ENCODE measurements at regions of chr16 and their contacts with region 1.

Region 1: DNA sequence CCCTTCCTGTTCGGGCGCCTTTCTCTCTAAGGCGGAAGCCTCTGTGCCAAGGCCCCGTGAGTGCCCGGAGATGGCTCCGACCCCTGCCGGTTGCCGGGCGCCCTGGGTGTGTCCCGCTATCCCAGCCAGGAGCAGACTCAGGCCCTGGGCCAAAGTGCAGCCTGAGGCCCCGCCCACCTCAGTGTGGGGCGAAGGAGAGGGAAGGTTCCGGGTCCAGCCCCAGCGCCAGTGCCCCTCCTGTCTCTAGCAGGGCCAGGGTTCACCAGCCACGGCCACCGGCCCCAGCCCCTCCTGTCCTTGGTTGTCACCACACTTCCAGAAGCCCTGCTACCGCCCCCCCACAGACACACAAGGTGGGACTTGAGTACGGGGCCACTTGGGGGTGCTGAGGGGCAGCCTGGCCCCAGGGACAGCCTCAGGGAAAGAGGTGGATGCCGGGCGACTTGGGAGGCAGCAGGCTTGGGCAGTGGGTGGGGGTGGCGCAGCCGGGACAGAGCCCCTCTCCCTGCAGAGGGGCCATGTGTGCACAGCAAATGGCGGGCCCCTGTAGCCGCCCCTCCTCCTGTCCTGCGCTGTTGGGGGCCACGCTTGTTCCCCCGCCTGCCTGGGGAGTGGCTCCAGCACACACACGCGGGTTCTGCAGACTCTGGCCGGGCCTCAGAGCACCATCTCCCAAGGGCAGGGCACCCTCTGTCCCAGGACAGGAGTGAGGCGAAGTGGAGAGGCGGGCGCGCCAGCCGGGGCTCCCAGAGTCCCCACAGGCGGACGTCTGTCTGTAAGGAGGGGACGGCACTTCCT is 6.0 kb downstream of the C1QTNF8 start:
- DNase-seq: no peak
- H3K4me3 ChIP-seq: peak overlapping the region; percentile 33 to 34
- H3K27ac ChIP-seq: no peak overlapping the region
- H3K4me1 ChIP-seq: peaks cover 25% of the 10 kb centered on the region
- H3K27me3 ChIP-seq: no peaks in the 10 kb centered on the region
- CTCF ChIP-seq: no peak
- POLR2A ChIP-seq: no peak

Region 2: DNA sequence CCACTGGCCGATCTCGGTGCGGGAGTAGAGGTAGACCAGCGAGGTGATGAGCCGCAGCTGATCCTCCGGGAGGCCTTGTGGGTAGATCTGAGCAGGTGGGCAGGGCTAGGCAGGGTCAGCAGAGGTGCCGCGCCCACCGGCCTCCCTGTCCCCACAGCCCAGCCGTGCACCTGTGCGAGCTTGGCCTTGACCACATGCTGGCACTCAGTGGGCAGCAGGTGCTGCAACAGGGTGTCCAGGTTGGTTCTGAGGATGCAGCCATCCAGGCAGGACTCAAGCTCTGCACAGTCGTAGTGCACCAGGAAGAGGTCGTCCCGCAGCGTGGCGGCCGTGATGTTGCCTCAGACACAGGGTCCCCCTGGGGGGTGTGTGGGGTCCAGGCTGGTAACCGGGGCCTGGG is 317.1 kb before region 1 on chr16:
- intact Hi-C with region 1: loop called (anchors 1 kb)
- DNase-seq: no peak
- H3K4me3 ChIP-seq: no peak overlapping the region
- H3K27ac ChIP-seq: no peak overlapping the region
- H3K4me1 ChIP-seq: no peaks in the 10 kb centered on the region
- H3K27me3 ChIP-seq: no peaks in the 10 kb centered on the region
- CTCF ChIP-seq: no peak
- POLR2A ChIP-seq: no peak

Region 3: DNA sequence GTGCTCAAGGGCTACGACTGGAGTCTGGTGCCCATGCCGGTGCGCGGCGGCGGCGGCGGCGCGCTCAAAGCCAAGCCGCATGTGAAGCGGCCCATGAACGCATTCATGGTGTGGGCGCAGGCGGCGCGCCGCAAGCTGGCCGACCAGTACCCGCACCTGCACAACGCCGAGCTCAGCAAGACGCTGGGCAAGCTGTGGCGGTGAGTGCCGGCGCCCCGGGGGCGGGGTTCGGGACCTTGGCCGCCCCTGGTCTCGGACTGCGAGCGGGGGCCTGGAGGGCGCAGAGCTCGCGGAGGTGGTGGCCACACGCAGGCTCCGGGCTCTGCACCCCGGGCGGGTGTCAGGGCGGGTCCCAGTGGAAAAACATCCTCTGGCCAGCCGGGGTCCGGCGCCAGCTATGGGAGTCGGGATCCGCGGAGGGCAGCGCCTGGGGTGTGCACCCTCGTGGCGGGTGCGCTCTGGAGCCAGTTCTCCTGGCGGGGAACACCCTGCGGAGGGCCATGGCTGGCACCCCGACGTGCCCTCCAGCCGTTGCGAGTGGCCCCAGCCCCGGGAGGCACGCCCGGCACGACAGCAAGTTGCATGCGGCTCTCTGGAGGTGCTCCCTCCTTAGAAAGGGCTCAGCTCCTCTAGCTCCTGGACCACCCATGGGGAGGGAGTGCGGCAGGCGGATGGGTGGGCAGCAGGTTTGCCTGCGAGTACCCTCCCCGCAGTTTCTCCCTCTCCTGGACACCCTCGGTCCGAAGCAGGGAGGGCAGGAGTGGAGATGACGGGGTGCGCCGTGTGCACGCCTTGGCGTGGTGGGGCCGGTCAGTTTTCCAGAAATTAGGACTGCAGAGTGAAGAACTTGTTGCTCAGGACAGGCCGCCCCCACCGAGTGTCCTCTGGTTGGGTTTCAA is 107.6 kb before region 1 on chr16:
- intact Hi-C with region 1: no loop called
- DNase-seq: no peak
- H3K4me3 ChIP-seq: peak overlapping the region; percentile 46 to 71
- H3K27ac ChIP-seq: no peak overlapping the region
- H3K4me1 ChIP-seq: peaks cover 17% of the 10 kb centered on the region
- H3K27me3 ChIP-seq: no peaks in the 10 kb centered on the region
- CTCF ChIP-seq: no peak
- POLR2A ChIP-seq: no peak